Psoas muscle (tissue), 8 donors: ENCODE measurements at regions of chr6 and their contacts with region 1.

Region 1: DNA sequence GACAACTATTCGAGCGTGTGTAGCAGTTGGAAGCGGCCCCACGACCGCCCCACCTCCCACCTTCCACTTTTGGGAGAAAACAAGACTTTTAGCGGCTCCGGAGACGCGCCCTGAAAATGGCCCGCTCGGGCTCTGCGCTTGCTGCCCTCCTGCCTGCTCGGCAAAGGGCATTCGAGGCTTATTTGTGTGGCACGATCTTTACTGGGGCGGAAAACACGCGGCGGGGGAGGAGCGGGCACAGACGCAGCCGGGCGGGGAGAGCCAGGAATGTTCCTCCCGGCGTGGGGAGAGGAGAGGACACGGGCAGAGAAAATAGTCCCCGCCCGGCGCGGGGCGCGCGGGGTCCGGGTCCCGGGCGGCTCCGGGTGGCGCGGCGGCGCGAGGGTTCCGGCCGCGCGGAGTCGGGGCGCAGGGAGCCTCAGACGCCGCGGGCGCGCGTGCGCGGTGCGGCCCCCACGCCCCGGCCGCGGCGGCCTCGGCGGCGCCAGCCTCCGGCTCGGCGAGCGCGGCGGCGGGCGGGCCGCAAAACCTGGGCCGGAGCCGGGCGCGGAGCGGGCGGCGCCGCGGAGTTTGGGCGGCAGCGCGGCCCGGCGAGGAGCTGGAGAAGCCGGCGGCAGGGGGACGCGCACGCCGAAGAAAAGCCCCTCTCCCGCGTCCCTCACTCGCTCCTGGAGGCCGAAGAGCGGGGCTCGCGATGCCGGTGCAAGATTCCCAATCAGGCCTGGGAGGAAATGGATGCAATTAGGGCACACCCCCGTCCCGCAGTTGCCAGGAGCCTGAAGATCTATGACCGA is 90.0 kb upstream of the ARID1B start:
- DNase-seq: peak; percentile 90 to 96
- ATAC-seq: peak; percentile 94 to 97 (median 96)
- H3K4me3 ChIP-seq: peak overlapping the region; percentile 84
- H3K27ac ChIP-seq: peak overlapping the region; percentile 96
- H3K4me1 ChIP-seq: peaks cover 11% of the 10 kb centered on the region
- H3K27me3 ChIP-seq: no peaks in the 10 kb centered on the region
- CTCF ChIP-seq: no peak

Region 2: DNA sequence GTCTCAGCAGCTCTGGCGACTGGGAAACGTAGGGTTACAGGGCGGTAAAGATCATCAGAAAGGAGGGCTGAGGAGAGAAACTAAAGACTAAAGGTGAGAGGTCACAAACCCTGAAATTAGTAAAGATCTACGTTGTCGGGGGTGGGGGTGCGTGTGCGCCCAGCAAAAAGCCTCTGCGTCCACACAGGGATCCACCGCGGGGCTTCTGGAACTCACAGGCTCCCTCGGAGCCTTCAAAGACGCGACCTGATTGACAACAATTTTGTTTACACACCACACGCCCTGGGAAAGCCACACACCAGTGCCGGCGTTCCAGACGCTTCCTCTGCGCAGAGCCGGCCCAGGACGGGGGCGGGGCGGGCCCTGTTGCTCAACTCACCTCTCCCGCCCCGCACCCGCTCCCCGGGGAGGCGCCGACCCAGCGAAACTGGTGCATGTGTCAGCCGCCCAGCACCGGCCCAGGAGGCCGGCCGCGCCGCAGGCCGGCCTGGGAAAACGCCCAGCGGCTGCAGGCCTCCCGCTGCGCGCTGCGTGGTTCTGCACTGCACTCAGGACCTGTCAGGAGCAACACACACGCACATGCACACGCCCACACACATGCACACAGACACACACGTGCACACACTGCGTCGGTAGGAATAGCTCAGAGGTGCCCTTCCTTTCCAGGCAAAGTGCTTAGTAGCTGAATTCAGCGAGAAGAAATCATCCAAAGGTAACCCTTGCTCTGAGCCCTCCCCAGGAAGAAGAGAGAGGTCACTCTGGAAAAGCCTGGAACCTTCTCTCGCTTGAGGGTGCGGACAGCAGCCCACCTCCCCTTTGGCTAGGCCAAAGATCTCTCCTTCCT is 32.8 kb after region 1 on chr6:
- intact Hi-C with region 1: loop called (anchors 1 to 2 kb)
- DNase-seq: peak; percentile 97 to 98
- ATAC-seq: peak; percentile 93 to 98 (median 94)
- H3K4me3 ChIP-seq: peak overlapping the region; percentile 44
- H3K27ac ChIP-seq: peak overlapping the region; percentile 82
- H3K4me1 ChIP-seq: peaks cover 26% of the 10 kb centered on the region
- H3K27me3 ChIP-seq: no peaks in the 10 kb centered on the region
- CTCF ChIP-seq: no peak

Region 3: GRCh38 chr6:156876302-156876701 is 189.1 kb after region 1 on chr6:
- intact Hi-C with region 1: loop called in 1 of 2 experiments (anchors 10 kb)
- DNase-seq: peak; percentile 43 to 74
- ATAC-seq: peak; percentile 65 to 68 (median 66)
- H3K4me3 ChIP-seq: no peak overlapping the region
- H3K27ac ChIP-seq: peak overlapping the region; percentile 7
- H3K4me1 ChIP-seq: peaks cover 77% of the 10 kb centered on the region
- H3K27me3 ChIP-seq: no peaks in the 10 kb centered on the region
- CTCF ChIP-seq: peak; percentile 26

Region 4: GRCh38 chr6:157021344-157021992 is 334.3 kb after region 1 on chr6:
- intact Hi-C with region 1: loop called in 1 of 2 experiments (anchors 2 kb)
- DNase-seq: peak; percentile 94 to 95
- ATAC-seq: peak; percentile 84 to 90 (median 88)
- H3K4me3 ChIP-seq: peak overlapping the region; percentile 84
- H3K27ac ChIP-seq: peak overlapping the region; percentile 100
- H3K4me1 ChIP-seq: peaks cover 48% of the 10 kb centered on the region
- H3K27me3 ChIP-seq: no peaks in the 10 kb centered on the region
- CTCF ChIP-seq: peak; percentile 53

Region 5: GRCh38 chr6:157169656-157170055 is 482.5 kb after region 1 on chr6:
- intact Hi-C with region 1: no loop called
- DNase-seq: no peak
- ATAC-seq: peak; percentile 84 to 98 (median 96)
- H3K4me3 ChIP-seq: no peak overlapping the region
- H3K27ac ChIP-seq: peak overlapping the region; percentile 75
- H3K4me1 ChIP-seq: peaks cover 17% of the 10 kb centered on the region
- H3K27me3 ChIP-seq: no peaks in the 10 kb centered on the region
- CTCF ChIP-seq: no peak